ENCODE measurements at regions of chr1 and their contacts with region 1.

Region 1: DNA sequence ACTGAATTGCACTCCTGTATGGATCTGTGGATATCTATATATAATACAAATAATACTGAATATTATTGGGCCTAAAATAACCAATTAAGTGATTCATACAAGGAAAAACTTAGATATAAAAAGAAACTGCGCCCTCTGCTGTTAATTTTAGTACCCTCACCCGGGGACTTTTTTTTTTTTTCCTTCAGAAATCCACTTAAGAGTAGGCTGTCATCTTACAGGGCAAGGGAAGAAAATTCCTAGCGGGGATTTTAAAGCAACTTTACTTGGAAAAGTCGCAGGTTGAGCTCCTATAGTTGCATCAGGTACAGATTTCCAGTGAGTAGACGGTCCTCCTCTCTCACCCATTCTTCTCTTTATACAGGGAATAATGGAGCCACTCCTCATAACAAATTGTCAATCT is 1.3 kb downstream of the NTNG1 start:
- DNase-seq: peak; percentile 7
- ATAC-seq: no peak
- H3K4me3 ChIP-seq: no peak overlapping the region
- H3K27ac ChIP-seq: no peak overlapping the region
- H3K4me1 ChIP-seq: 0 out of 2 replicates have a peak, but pooled peaks cover 5% of the 10 kb centered on the region
- H3K27me3 ChIP-seq: peaks cover 5 to 28% of the 10 kb centered on the region in 2 experiments; a peak in 4 of 5 replicates
- CTCF ChIP-seq: peak; percentile 22
- EP300 ChIP-seq: no peak
- POLR2A ChIP-seq: no peak
- RAD21 ChIP-seq: no peak

Region 2: DNA sequence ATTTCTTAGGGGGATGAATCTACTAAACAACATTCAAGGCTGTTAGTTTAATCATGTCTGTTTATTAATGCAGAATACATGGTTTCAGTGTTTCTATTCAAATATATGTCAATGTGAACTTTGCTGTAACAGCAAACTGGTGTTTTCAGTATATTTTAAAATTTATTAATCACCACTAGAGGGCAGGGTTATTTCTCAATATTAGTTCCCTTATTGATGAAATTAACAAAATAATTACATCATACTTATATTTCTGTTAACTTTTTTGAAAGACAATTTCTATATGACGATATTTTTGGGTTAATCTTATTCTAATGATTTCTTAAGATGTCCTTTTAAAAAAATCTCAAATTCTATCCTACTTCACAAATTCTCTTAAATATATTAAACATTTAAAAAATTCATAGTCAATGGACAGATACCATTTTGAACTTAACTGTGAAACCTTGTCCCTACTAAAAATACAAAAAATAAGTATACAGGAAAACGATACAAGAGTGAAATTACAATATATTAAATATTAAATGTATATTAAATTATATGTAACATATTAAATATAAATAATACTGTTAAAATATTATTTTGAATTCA is 1119.7 kb before region 1 on chr1:
- CTCF ChIA-PET with region 1: no interaction called
- POLR2A ChIA-PET with region 1: no interaction called
- in situ Hi-C with region 1: no loop called
- intact Hi-C with region 1: loop called (anchors 10 kb)
- DNase-seq: no peak
- ATAC-seq: no peak
- H3K4me3 ChIP-seq: no peak overlapping the region
- H3K27ac ChIP-seq: no peak overlapping the region
- H3K4me1 ChIP-seq: no peaks in the 10 kb centered on the region
- H3K27me3 ChIP-seq: no peaks in the 10 kb centered on the region
- CTCF ChIP-seq: no peak
- EP300 ChIP-seq: no peak
- POLR2A ChIP-seq: no peak
- RAD21 ChIP-seq: no peak

Region 3: GRCh38 chr1:107056426-107057196 is 85.5 kb before region 1 on chr1 and contains the start of gene PRMT6:
- CTCF ChIA-PET with region 1: no interaction called
- POLR2A ChIA-PET with region 1: no interaction called
- in situ Hi-C with region 1: no loop called
- intact Hi-C with region 1: loop called (anchors 2 kb)
- DNase-seq: peak; percentile 64
- ATAC-seq: peak; percentile 99
- H3K4me3 ChIP-seq: peak within 1 kb of the TSS; percentile 76 to 91 (median 80)
- H3K27ac ChIP-seq: peak within 1 kb of the TSS; percentile 59
- H3K4me1 ChIP-seq: peaks cover 19% of the 10 kb centered on the region
- H3K27me3 ChIP-seq: no peaks in the 10 kb centered on the region
- CTCF ChIP-seq: 0 out of 2 replicates have a peak, but pooled peaks have one; percentile 31
- EP300 ChIP-seq: no peak
- POLR2A ChIP-seq: peak; percentile 54 to 58
- RAD21 ChIP-seq: no peak
- total RNA-seq, gene PRMT6: 15.8 and 20.3 TPM in 2 replicates